IMR-90 (cell line): ENCODE measurements at regions of chr19 and their contacts with region 1.

Region 1: GRCh38 chr19:17475541-17476115 is 5.3 kb downstream of the SLC27A1 start:
- DNase-seq: peak; percentile 61
- ATAC-seq: peak; percentile 48
- H3K4me3 ChIP-seq: no peak overlapping the region
- H3K27ac ChIP-seq: peak overlapping the region; percentile 46
- H3K4me1 ChIP-seq: peaks cover 16% of the 10 kb centered on the region
- H3K27me3 ChIP-seq: no peaks in the 10 kb centered on the region
- CTCF ChIP-seq: no peak
- POLR2A ChIP-seq: no peak
- RAD21 ChIP-seq: no peak

Region 2: DNA sequence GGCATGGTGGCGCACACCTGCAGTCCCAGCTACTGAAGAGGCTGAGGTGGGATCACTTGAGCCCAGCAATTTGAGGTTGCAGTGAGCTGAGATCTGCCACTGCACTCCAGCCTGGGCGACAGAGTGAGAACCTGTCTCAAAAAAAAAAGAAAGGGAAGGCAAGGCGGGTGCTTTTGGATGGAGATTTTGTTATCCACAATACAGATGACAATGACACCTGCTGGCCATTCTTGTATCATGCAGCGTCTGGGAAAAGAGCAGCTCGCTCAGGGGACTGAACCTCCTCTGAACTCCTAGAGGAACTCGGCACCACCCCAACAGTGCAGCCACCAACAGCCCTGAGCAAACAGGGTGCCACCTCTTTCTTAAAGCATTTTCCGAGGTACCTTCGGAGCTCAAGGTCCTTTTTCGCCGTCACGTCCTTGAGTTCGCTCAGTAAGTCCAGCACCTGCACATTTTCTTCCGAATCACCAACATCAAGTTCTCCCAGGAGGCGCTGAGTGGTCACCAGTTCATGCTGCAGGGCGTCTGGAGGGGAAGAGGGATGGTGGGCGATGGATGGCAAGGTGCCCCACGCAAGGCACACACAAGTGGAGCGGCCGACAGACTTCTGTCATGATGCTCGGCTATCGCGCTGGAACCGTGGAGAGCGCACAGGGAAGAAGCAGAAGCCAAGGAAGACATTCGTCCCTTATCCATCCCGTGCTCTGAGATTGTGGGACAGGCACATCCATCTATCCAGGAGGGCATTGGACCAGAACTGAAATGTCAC is 423.0 kb before region 1 on chr19:
- CTCF ChIA-PET with region 1: no interaction called
- POLR2A ChIA-PET with region 1: no interaction called
- dilution Hi-C with region 1: no loop called
- in situ Hi-C with region 1: no loop called
- intact Hi-C with region 1: no loop called
- DNase-seq: peak; percentile 59
- ATAC-seq: peak; percentile 72
- H3K4me3 ChIP-seq: no peak overlapping the region
- H3K27ac ChIP-seq: no peak overlapping the region
- H3K4me1 ChIP-seq: peaks cover 6% of the 10 kb centered on the region
- H3K27me3 ChIP-seq: no peaks in the 10 kb centered on the region
- CTCF ChIP-seq: peak; percentile 63
- POLR2A ChIP-seq: no peak
- RAD21 ChIP-seq: peak; percentile 68

Region 3: GRCh38 chr19:17522988-17523872 is 47.6 kb after region 1 on chr19:
- CTCF ChIA-PET with region 1: no interaction called
- POLR2A ChIA-PET with region 1: interaction called, 19 read pairs
- dilution Hi-C with region 1: no loop called
- in situ Hi-C with region 1: no loop called
- intact Hi-C with region 1: no loop called
- DNase-seq: no peak
- ATAC-seq: no peak; the same call in 1 of the 2 replicates
- H3K4me3 ChIP-seq: no peak overlapping the region
- H3K27ac ChIP-seq: no peak overlapping the region
- H3K4me1 ChIP-seq: no peaks in the 10 kb centered on the region
- H3K27me3 ChIP-seq: no peaks in the 10 kb centered on the region
- CTCF ChIP-seq: no peak
- POLR2A ChIP-seq: no peak
- RAD21 ChIP-seq: no peak